ENCODE measurements at regions of chr5 and their contacts with region 1.

Region 1: GRCh38 chr5:149367249-149367971 is 9.6 kb downstream of the PCYOX1L start:
- H3K4me3 ChIP-seq: no peak overlapping the region
- H3K27ac ChIP-seq: no peak overlapping the region
- H3K4me1 ChIP-seq: no peaks in the 10 kb centered on the region
- CTCF ChIP-seq: peak; percentile 86

Region 2: DNA sequence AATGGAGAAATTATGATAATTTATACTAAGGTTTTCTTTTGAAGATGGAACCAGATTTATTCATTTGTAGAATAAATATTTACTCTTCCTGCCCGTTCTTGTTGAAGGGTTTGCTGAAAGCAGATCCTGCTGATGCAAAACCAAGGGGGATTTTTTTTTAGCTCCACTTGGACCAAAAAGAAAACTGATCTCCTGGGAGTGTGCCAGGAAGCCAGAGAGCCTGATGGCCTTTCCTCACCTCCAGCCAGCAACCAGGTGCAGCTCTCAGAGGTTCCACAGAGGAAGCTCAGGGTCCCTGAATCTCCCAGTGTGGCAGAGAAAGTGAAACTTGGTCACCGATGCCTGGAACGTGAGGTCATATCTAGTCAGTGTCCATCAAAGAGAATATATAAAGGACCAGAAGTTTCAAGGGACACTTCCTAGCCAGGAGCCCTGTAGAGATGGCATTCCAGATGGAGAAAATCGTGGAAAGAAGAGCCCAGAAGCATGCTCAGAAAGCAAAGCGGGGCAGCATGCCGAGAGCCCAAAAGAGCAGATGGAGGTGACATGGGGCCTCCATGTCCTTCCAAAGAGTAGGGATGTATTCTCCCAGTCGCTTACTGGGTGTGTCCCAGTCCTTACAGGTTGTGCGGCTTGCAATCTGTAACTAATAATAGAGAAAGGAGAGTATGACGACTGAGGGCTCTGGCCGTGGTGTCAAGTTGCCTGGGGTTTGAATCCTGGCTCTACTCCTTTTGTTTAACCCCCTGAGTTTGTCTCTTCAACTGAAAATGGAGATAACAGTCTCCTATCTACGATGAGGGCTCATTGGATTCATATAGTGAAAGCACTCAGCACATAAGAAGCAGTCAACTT is 83.6 kb before region 1 on chr5:
- CTCF ChIA-PET with region 1: no interaction called
- POLR2A ChIA-PET with region 1: no interaction called
- H3K4me3 ChIP-seq: no peak overlapping the region
- H3K27ac ChIP-seq: no peak overlapping the region
- H3K4me1 ChIP-seq: no peaks in the 10 kb centered on the region
- CTCF ChIP-seq: no peak

Region 3: GRCh38 chr5:149317281-149318048 is 49.9 kb before region 1 on chr5:
- CTCF ChIA-PET with region 1: interaction called, 61 read pairs
- POLR2A ChIA-PET with region 1: interaction called, 3 read pairs
- H3K4me3 ChIP-seq: no peak overlapping the region
- H3K27ac ChIP-seq: no peak overlapping the region
- H3K4me1 ChIP-seq: peaks cover 8% of the 10 kb centered on the region; the same call in 1 of the 2 replicates
- CTCF ChIP-seq: peak; percentile 59; the same call in 1 of the 2 replicates

Region 4: GRCh38 chr5:149325166-149325735 is 42.2 kb before region 1 on chr5:
- CTCF ChIA-PET with region 1: interaction called, 61 read pairs
- POLR2A ChIA-PET with region 1: interaction called, 3 read pairs
- H3K4me3 ChIP-seq: no peak overlapping the region
- H3K27ac ChIP-seq: no peak overlapping the region
- H3K4me1 ChIP-seq: peaks cover 8% of the 10 kb centered on the region; the same call in 1 of the 2 replicates
- CTCF ChIP-seq: no peak

Region 5: DNA sequence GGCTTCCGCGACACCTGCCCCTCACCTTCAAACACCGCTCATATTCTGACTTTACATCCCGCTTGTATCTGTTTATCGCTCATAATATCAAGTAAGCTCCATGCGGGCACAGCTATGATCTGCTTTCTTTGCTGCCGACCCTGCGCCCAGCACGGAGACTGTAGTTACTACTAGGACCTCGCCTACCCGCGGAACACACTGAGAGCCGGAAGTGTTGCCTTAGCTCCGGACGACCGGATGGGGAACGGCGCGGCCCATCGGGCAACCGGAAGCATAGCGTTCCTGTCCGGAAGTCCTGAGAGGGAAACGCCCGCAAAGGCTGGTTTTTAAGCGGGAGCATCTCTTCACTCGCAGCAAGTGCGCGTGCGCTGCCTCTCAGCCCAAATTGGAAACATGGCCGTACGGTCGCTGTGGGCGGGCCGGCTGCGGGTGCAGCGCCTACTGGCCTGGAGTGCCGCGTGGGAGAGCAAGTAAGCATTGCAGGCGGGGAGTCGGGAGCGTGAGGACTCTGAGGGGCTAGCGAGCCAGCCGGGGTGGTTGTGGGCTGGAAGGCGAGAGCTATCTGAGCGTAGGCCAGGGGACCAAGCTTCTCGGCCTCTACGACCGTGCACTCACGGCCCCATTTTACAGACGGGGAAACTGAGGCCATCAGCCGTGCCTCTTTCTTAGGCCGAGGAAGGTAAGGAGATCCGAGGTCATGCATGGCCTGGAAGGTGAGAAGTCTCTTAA is 22.1 kb before region 1 on chr5 and contains the start of gene GRPEL2:
- CTCF ChIA-PET with region 1: interaction called, 12 read pairs
- POLR2A ChIA-PET with region 1: interaction called, 5 read pairs
- H3K4me3 ChIP-seq: peak within 1 kb of the TSS; percentile 94
- H3K27ac ChIP-seq: peak within 1 kb of the TSS; percentile 67
- H3K4me1 ChIP-seq: no peaks in the 10 kb centered on the region
- CTCF ChIP-seq: no peak

Region 6: DNA sequence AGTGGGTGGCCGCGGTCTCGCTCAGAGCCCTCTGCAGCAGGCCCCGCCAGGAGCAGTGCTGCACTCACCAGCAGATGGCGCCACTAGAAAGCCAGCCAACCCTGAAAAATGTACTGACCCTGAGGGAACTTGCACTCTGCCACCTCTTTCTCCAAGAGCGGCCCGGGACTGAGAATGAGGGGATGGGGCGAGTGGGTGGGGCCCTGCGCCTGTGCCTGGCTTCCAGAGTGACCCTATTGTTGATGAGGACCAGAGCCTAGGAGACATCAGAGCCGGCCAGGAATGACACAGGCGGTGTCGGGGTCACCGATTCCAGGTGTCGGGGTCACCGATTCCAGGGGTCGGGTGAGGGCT is 14.6 kb after region 1 on chr5:
- CTCF ChIA-PET with region 1: interaction called, 71 read pairs
- POLR2A ChIA-PET with region 1: no interaction called
- H3K4me3 ChIP-seq: no peak overlapping the region
- H3K27ac ChIP-seq: no peak overlapping the region
- H3K4me1 ChIP-seq: no peaks in the 10 kb centered on the region
- CTCF ChIP-seq: peak; percentile 89

Region 7: GRCh38 chr5:149442563-149443182 is 75.3 kb after region 1 on chr5:
- CTCF ChIA-PET with region 1: interaction called, 212 read pairs
- POLR2A ChIA-PET with region 1: no interaction called
- H3K4me3 ChIP-seq: no peak overlapping the region
- H3K27ac ChIP-seq: no peak overlapping the region
- H3K4me1 ChIP-seq: no peaks in the 10 kb centered on the region
- CTCF ChIP-seq: peak; percentile 88

Measured in HEK293 (cell line).